ENCODE measurements at regions of chr1 and their contacts with region 1.

Region 1: DNA sequence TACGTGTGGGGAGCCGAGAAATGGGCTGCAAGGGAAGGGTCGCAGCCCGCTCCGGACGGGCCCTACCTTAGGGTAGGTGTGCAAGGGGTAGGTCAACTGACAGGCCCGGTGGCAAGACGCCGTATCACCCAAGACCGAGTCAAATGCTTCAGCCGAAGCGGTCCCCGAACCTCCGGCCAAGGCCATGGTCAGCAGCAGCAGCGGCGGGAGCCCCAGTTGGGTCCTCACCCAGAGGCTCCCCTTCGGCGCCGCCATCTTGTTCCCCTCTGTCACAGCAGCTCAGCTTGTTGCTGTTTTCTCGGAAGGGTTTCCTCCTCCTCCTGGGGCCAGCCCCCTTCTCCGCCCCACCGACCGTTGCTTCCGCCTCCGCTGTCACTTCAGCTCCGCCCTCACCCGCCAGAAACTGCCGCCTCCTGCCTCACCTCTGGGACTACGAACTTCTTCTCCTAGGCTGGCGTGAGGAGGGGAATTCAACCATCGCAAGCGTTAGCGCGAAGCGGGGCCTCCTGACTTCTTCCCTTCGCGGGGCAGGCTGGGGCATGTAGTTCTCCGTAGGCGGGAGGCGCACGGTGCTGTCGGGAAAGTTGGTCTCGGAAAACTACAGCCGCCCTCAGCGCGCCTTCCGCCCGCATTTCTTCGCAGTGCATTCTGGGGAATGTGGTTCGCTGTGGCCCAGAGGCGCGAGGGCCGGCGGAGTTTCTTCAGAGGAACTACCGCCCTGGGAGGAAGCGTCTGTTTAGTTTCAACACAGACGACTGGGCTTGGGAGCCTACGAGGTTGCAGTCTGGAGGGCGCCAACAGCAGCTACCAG is at the starts of genes TCEANC2 and TMEM59:
- DNase-seq: peak; percentile 93 to 99 (median 95)
- ATAC-seq: peak; percentile 89
- H3K4me3 ChIP-seq: peak within 1 kb of the TSS; percentile 89
- H3K4me3 Mint-ChIP-seq: no peak within 1 kb of the TSS
- H3K27ac ChIP-seq: peak within 1 kb of the TSS; percentile 71 to 90
- H3K27ac Mint-ChIP-seq: no peak within 1 kb of the TSS
- H3K4me1 ChIP-seq: peaks cover 35% of the 10 kb centered on the region
- H3K4me1 Mint-ChIP-seq: peaks cover 45% of the 10 kb centered on the region
- H3K27me3 ChIP-seq: no peaks in the 10 kb centered on the region
- H3K27me3 Mint-ChIP-seq: no peaks in the 10 kb centered on the region
- CTCF ChIP-seq: no peak
- total RNA-seq, gene TCEANC2: 2.3 to 2.7 TPM
- total RNA-seq, gene TMEM59: 128 TPM

Region 2: GRCh38 chr1:52365746-52366516 is 1687.2 kb before region 1 on chr1 and contains the start of gene CC2D1B:
- CTCF ChIA-PET with region 1: no interaction called
- POLR2A ChIA-PET with region 1: no interaction called
- intact Hi-C with region 1: loop called in 1 of 2 experiments (anchors 5 kb)
- DNase-seq: peak; percentile 97 to 100 (median 99)
- ATAC-seq: peak; percentile 79
- H3K4me3 ChIP-seq: peak within 1 kb of the TSS; percentile 76
- H3K4me3 Mint-ChIP-seq: peak within 1 kb of the TSS; percentile 94
- H3K27ac ChIP-seq: peak within 1 kb of the TSS; percentile 77 to 89
- H3K27ac Mint-ChIP-seq: peak within 1 kb of the TSS; percentile 96
- H3K4me1 ChIP-seq: peaks cover 50% of the 10 kb centered on the region
- H3K4me1 Mint-ChIP-seq: peaks cover 60% of the 10 kb centered on the region
- H3K27me3 ChIP-seq: no peaks in the 10 kb centered on the region
- H3K27me3 Mint-ChIP-seq: no peaks in the 10 kb centered on the region
- CTCF ChIP-seq: no peak
- total RNA-seq, gene CC2D1B: 46.5 to 47.5 TPM

Region 3: GRCh38 chr1:53837924-53838652 is 215.1 kb before region 1 on chr1 and contains the start of gene NDC1:
- CTCF ChIA-PET with region 1: no interaction called
- POLR2A ChIA-PET with region 1: interaction called, 4 read pairs
- intact Hi-C with region 1: loop called (anchors 1 kb)
- DNase-seq: peak; percentile 79 to 96 (median 86)
- ATAC-seq: peak; percentile 89
- H3K4me3 ChIP-seq: peak within 1 kb of the TSS; percentile 73
- H3K4me3 Mint-ChIP-seq: peak within 1 kb of the TSS; percentile 95
- H3K27ac ChIP-seq: peak within 1 kb of the TSS; percentile 95 to 98
- H3K27ac Mint-ChIP-seq: peak within 1 kb of the TSS; percentile 95
- H3K4me1 ChIP-seq: peaks cover 13% of the 10 kb centered on the region
- H3K4me1 Mint-ChIP-seq: peaks cover 37% of the 10 kb centered on the region
- H3K27me3 ChIP-seq: peaks cover 0 to 5% of the 10 kb centered on the region in 2 experiments
- H3K27me3 Mint-ChIP-seq: no peaks in the 10 kb centered on the region
- CTCF ChIP-seq: no peak
- total RNA-seq, gene NDC1: 5.4 to 8.1 TPM

Region 4: DNA sequence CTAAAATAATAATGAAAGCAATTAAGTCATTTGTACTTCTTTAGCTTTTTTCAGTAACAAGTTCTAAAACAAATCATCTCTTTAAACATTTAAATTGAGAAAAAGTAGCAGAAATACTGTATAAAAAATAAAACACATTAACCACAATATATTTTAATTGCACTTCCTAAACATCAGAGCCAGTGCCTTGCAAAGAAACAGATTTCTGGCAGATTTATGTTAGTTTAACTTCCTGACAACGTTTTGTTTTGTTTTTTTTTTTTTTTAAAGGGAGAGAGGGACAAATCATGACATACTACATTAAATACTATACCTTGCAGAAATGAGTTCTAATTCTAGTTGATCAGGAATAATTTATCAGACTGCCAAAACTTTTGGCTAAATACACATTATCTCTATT is 11.3 kb before region 1 on chr1:
- CTCF ChIA-PET with region 1: interaction called, 3 read pairs
- POLR2A ChIA-PET with region 1: interaction called, 10 read pairs
- intact Hi-C with region 1: no loop called
- DNase-seq: no peak
- ATAC-seq: no peak
- H3K4me3 ChIP-seq: no peak overlapping the region
- H3K4me3 Mint-ChIP-seq: no peak overlapping the region
- H3K27ac ChIP-seq: no peak overlapping the region
- H3K27ac Mint-ChIP-seq: no peak overlapping the region
- H3K4me1 ChIP-seq: no peaks in the 10 kb centered on the region
- H3K4me1 Mint-ChIP-seq: peaks cover 22% of the 10 kb centered on the region
- H3K27me3 ChIP-seq: no peaks in the 10 kb centered on the region
- H3K27me3 Mint-ChIP-seq: no peaks in the 10 kb centered on the region
- CTCF ChIP-seq: no peak

Region 5: GRCh38 chr1:54199765-54200518 is 146.8 kb after region 1 on chr1 and contains the starts of genes CYB5RL and MRPL37:
- CTCF ChIA-PET with region 1: no interaction called
- POLR2A ChIA-PET with region 1: interaction called, 9 read pairs
- intact Hi-C with region 1: loop called in 1 of 2 experiments (anchors 5 kb)
- DNase-seq: peak; percentile 78 to 96 (median 84)
- ATAC-seq: peak; percentile 98
- H3K4me3 ChIP-seq: peak within 1 kb of the TSS; percentile 96
- H3K4me3 Mint-ChIP-seq: peak within 1 kb of the TSS; percentile 92
- H3K27ac ChIP-seq: peak within 1 kb of the TSS; percentile 22 to 37
- H3K27ac Mint-ChIP-seq: peak within 1 kb of the TSS; percentile 87
- H3K4me1 ChIP-seq: peaks cover 25% of the 10 kb centered on the region
- H3K4me1 Mint-ChIP-seq: peaks cover 34% of the 10 kb centered on the region
- H3K27me3 ChIP-seq: no peaks in the 10 kb centered on the region
- H3K27me3 Mint-ChIP-seq: no peaks in the 10 kb centered on the region
- CTCF ChIP-seq: no peak
- total RNA-seq, gene CYB5RL: 2.0 to 2.1 TPM
- total RNA-seq, gene MRPL37: 24.0 to 24.4 TPM

Region 6: DNA sequence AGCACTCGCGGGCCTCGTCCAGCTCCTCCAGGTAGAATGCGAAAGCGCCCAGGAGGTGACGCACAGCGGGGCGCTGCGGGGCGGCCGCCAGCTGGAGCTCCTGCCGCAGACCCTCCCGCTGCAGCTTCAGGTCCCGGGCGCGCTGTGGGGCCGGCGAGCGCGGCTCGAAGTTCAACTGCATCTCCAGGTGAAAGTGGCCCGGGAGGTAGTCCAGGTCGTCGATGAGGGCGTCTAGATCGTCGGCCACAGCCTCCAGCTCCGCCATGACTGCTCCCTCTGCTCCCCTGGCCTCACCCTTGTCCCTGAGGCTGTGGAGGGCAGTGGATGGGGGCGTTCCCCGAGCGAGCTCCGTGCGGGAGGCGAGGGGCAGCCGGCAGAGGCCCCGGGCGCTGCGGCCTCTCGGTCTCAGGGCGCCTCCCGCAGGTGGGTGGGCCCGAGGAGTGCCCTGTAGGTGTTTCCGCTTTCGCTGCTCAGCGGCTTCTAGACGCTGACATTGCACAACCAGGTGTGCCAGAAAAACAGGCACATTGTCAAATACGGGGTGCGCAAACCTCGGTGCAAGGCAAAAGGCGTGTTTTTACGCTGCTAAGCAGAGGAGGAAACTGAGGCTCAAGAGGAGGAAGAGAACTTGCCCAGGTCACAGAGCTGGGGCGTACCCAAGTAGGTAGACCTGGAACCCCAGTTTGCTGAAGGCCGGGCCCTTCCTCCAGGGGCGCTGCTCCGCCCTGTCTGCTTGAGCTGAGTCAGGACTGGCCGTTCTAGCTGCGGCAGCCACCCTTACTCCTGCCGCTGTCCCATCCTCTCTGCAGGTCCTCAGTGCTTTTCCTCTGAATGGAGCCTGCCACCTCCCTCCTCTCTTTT is 748.0 kb after region 1 on chr1 and contains the start of gene TTC22:
- CTCF ChIA-PET with region 1: interaction called, 3 read pairs
- POLR2A ChIA-PET with region 1: interaction called, 14 read pairs
- intact Hi-C with region 1: no loop called
- DNase-seq: peak; percentile 43 to 83 (median 68)
- ATAC-seq: peak; percentile 87
- H3K4me3 ChIP-seq: peak within 1 kb of the TSS; percentile 82
- H3K4me3 Mint-ChIP-seq: peak within 1 kb of the TSS; percentile 98
- H3K27ac ChIP-seq: peak within 1 kb of the TSS; percentile 33 to 57
- H3K27ac Mint-ChIP-seq: peak within 1 kb of the TSS; percentile 94
- H3K4me1 ChIP-seq: peaks cover 58% of the 10 kb centered on the region
- H3K4me1 Mint-ChIP-seq: peaks cover 63% of the 10 kb centered on the region
- H3K27me3 ChIP-seq: no peaks in the 10 kb centered on the region
- H3K27me3 Mint-ChIP-seq: no peaks in the 10 kb centered on the region
- CTCF ChIP-seq: peak; percentile 84
- total RNA-seq, gene TTC22: 4.4 to 4.5 TPM